Transverse colon (tissue), 4 donors: ENCODE measurements at regions of chr4 and their contacts with region 1.

Region 1: GRCh38 chr4:184263910-184264732 is 46.4 kb upstream of the ENPP6 start:
- DNase-seq: peak; percentile 96
- H3K4me3 ChIP-seq: no peak overlapping the region
- H3K27ac ChIP-seq: peak overlapping the region in 1 of 4 donors; percentile 14
- H3K4me1 ChIP-seq: peaks cover 0 to 5% (median 0%) of the 10 kb centered on the region in 4 donors
- H3K27me3 ChIP-seq: no peaks in the 10 kb centered on the region
- CTCF ChIP-seq: peak; percentile 89 to 97 (median 96)
- EP300 ChIP-seq: no peak
- POLR2A ChIP-seq: no peak

Region 2: DNA sequence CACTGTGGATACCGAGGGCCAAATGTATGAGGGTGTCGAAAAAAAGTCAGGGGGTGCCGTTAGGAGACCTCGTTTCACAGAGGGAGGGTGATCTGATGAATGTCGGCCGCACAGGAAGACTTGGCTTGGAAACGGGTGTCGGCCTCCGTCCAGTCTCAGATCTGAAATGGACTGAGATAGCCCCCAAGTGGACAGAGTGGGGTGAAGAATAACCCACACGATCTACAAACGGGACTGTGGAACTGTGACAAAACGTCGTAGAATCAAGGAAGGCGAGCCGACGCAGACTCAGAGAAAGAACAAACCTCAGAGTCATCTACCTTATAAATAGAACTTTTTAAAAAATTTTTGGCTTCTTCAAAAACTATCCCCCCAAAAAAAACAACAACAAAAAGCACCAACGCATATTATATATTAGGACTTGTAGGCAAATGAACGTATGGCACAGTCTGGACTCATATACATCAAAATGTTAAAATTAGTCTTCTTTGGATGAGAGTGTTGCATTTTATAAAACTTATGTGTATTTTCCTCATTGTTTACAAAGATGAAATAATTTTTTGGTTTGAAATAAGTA is 274.0 kb after region 1 on chr4:
- in situ Hi-C with region 1: loop called in 3 of 4 experiments (anchors 5 to 25 kb)
- intact Hi-C with region 1: loop called (anchors 5 kb)
- DNase-seq: peak; percentile 89
- H3K4me3 ChIP-seq: peak overlapping the region; percentile 29 to 64 (median 55)
- H3K27ac ChIP-seq: peak overlapping the region; percentile 93 to 97 (median 96)
- H3K4me1 ChIP-seq: peaks cover 7 to 24% (median 11%) of the 10 kb centered on the region in 4 donors
- H3K27me3 ChIP-seq: no peaks in the 10 kb centered on the region
- CTCF ChIP-seq: peak; percentile 58 to 90 (median 63)
- EP300 ChIP-seq: no peak
- POLR2A ChIP-seq: no peak

Region 3: GRCh38 chr4:184544788-184545409 is 280.8 kb after region 1 on chr4:
- in situ Hi-C with region 1: loop called in 2 of 4 experiments (anchors 10 to 25 kb)
- intact Hi-C with region 1: no loop called
- DNase-seq: no peak
- H3K4me3 ChIP-seq: no peak overlapping the region
- H3K27ac ChIP-seq: no peak overlapping the region
- H3K4me1 ChIP-seq: peaks cover 0 to 14% (median 2%) of the 10 kb centered on the region in 4 donors
- H3K27me3 ChIP-seq: no peaks in the 10 kb centered on the region
- CTCF ChIP-seq: no peak
- EP300 ChIP-seq: no peak
- POLR2A ChIP-seq: no peak

Region 4: DNA sequence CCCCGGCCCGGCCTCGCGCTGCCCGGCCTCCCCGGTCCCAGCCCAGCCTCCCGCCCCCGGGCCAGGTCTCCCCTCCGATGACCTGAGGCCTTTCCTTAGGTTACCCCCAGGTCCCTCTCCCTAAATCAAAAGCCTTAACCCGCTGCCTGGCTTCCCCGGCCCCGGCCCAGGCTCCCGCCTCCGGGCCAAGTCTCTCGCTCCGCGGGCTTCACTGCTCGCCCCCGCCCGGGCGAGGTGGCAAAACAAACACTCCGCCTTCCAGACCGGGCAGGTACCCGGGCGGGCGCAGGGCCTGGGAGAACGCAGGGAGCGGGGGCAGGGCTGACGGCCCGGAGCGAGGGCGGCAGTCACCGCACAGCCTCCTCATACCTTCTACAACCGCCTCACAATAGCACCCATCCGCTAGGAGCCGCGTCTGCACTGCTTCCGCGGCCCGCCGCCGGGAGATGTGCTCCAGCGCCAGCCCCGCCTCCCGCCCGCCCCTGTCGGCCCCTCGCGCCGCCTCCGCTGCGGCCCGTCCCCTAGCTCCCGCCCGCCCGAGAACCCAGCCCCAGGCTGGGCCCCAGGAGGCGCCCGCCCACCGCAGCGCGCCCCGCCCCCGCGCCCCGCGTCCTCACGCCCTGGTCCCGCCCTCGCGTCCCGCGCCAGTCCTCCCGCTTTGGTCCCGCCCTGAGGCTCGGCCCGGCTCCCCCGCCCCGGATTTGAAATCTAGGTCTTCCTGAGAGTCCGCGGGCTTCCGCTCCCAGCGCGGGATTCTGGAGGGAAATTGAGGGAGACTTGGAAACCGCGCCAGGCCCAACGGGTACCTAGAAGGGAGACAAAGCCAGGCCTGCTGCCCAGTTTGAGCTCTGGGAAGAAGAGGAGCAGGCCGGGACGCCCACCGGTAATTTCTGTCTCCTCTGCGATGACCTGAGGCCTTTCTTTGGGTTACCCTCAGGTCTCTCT is 385.2 kb after region 1 on chr4 and contains the starts of genes CASP3 and PRIMPOL:
- in situ Hi-C with region 1: loop called in 1 of 4 experiments (anchors 25 kb)
- intact Hi-C with region 1: no loop called
- DNase-seq: peak; percentile 98
- H3K4me3 ChIP-seq: peak within 1 kb of the TSS; percentile 92 to 99 (median 94)
- H3K27ac ChIP-seq: peak within 1 kb of the TSS; percentile 99 to 100 (median 99)
- H3K4me1 ChIP-seq: peaks cover 22 to 46% (median 38%) of the 10 kb centered on the region in 4 donors
- H3K27me3 ChIP-seq: no peaks in the 10 kb centered on the region
- CTCF ChIP-seq: peak in 2 of 5 experiments; percentile 24 to 40
- EP300 ChIP-seq: no peak
- POLR2A ChIP-seq: peak; percentile 96
- total RNA-seq, gene CASP3: 6.2 to 147 (median 35.1) TPM
- total RNA-seq, gene PRIMPOL: 19.7 to 28.1 (median 24.6) TPM in 3 of 4 donors, not detected in the other

Region 5: DNA sequence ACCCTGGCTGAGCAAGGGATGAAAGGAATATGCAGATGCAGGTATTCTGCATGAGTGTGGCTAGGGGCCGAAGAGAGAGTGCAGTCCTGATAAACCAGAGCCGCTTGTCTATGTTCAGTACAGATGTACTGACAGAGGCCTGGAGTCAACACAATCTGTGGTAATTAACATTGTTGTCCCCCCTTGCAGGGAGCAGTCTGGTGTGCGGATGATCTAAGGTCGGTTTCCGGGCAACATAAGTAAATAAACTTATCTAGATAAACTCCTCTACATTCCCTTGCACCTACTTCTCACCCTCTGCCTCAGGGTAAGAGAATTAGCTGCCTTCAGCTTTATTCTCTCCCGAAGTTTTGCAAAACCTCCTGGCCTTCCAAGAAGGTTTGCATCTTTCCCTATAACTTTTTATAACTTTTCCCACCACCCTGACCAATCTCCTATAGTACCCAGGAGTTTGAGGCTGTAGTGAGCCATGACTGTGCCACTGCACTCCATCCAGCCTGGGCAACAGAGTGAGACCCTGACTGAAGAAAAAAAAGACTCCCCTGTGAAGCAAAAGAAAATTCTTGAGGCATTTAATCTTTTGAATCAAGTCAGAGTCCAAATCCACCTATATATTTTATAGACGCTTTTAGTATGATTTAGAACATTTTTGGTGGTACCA is 971.9 kb after region 1 on chr4:
- in situ Hi-C with region 1: no loop called
- intact Hi-C with region 1: loop called (anchors 10 kb)
- DNase-seq: peak; percentile 27
- H3K4me3 ChIP-seq: no peak overlapping the region
- H3K27ac ChIP-seq: peak overlapping the region in 2 of 4 donors; percentile 5 to 17
- H3K4me1 ChIP-seq: peaks cover 6 to 33% (median 25%) of the 10 kb centered on the region in 4 donors
- H3K27me3 ChIP-seq: no peaks in the 10 kb centered on the region
- CTCF ChIP-seq: no peak
- EP300 ChIP-seq: no peak
- POLR2A ChIP-seq: no peak